Activated CD4-positive, alpha-beta T cell treated with anti-CD3 and anti-CD28 coated beads for 36 hours (primary cell): ENCODE measurements at regions of chr15 and their contacts with region 1.

Region 1: DNA sequence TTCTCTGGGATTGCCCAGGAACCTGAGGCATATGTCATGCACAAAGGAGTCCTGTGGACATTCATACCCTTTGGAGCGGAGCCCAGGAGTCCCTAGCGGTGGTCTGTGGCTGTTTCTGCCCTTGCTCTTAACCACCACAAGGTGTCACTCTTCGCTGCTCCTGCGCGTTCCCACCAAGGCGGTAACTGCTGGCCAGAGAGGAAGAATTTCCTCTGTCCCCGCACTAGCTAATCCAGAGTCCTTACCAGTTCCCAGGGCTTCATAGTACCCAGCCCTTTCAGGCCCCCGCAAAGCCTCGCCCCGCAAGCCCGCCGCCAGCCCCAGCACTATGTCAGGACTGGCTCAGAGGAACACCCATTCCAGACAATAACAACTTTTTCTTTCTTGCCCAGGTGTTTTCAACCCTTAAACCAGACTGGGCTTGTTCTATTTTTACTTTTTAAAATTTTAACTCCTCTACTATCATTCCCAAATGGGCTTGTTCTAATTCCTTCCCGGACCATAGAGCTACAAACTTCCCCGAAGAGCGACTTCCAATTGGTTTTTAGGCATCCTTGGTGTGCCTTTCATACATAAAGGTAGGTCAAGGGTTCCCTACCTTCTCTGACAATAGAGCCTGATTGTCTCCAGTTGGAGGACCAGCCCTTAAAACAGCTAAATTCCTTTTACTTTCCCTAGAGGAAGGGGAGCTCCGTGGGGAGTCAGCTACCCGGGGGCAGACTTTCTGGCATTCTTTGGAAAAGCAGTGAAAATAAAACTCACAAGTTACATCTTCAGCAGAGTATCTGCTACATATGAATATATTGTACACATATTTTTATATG is 31.8 kb upstream of the ZNF774 start:
- DNase-seq: peak; percentile 83
- ATAC-seq: peak; percentile 99
- H3K4me3 Mint-ChIP-seq: no peak overlapping the region
- H3K27ac Mint-ChIP-seq: no peak overlapping the region
- H3K4me1 Mint-ChIP-seq: peaks cover 6% of the 10 kb centered on the region
- H3K27me3 Mint-ChIP-seq: no peaks in the 10 kb centered on the region

Region 2: DNA sequence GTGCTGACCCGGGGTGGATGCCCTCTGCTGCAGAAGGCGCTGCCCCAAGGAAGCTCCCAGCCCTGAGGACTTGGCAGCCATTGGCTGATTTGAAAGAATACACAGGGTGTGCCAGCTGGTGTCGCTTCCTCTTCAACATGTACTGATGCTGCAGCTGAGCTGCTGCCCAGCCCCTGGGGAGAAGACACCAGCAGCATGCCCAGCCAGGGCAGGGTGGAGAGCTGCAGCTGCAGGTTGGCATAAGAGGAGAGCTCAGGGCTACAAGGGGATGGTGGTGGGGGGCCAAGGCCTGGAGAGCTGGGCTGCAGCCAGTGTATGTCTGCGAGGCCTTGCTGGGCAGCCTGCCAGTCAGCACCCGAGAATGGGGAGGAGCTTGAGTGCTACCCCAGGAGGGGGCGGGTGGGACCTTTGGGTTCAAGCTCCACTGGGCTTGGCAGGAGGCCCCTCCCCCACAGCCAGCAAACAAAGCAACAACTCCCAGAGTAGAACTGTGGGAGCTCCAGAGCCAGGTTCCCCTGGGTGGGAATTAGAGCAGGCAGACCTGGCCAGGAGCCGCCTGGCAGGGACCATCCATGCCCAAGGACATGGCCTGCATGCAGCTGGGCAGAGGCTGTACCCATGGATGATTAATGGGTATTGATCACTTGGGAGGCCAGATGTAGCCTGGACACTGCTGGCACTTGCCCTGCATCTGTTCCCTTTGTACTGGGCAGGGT is 128.3 kb before region 1 on chr15:
- CTCF ChIA-PET with region 1: no interaction called
- POLR2A ChIA-PET with region 1: no interaction called
- intact Hi-C with region 1: no loop called
- DNase-seq: peak; percentile 64
- ATAC-seq: peak; percentile 73
- H3K4me3 Mint-ChIP-seq: peak overlapping the region; percentile 14
- H3K27ac Mint-ChIP-seq: no peak overlapping the region
- H3K4me1 Mint-ChIP-seq: peaks cover 30% of the 10 kb centered on the region
- H3K27me3 Mint-ChIP-seq: no peaks in the 10 kb centered on the region

Region 3: GRCh38 chr15:90300988-90301706 is 19.1 kb before region 1 on chr15:
- CTCF ChIA-PET with region 1: interaction called, 94 read pairs
- POLR2A ChIA-PET with region 1: no interaction called
- intact Hi-C with region 1: no loop called
- DNase-seq: peak; percentile 80
- ATAC-seq: peak; percentile 69
- H3K4me3 Mint-ChIP-seq: no peak overlapping the region
- H3K27ac Mint-ChIP-seq: peak overlapping the region; percentile 25
- H3K4me1 Mint-ChIP-seq: peaks cover 31% of the 10 kb centered on the region
- H3K27me3 Mint-ChIP-seq: no peaks in the 10 kb centered on the region

Region 4: GRCh38 chr15:90362936-90363212 is 42.6 kb after region 1 on chr15:
- CTCF ChIA-PET with region 1: interaction called, 20 read pairs
- POLR2A ChIA-PET with region 1: no interaction called
- intact Hi-C with region 1: no loop called
- DNase-seq: no peak
- ATAC-seq: no peak
- H3K4me3 Mint-ChIP-seq: no peak overlapping the region
- H3K27ac Mint-ChIP-seq: peak overlapping the region; percentile 5
- H3K4me1 Mint-ChIP-seq: peaks cover 25% of the 10 kb centered on the region
- H3K27me3 Mint-ChIP-seq: no peaks in the 10 kb centered on the region

Region 5: DNA sequence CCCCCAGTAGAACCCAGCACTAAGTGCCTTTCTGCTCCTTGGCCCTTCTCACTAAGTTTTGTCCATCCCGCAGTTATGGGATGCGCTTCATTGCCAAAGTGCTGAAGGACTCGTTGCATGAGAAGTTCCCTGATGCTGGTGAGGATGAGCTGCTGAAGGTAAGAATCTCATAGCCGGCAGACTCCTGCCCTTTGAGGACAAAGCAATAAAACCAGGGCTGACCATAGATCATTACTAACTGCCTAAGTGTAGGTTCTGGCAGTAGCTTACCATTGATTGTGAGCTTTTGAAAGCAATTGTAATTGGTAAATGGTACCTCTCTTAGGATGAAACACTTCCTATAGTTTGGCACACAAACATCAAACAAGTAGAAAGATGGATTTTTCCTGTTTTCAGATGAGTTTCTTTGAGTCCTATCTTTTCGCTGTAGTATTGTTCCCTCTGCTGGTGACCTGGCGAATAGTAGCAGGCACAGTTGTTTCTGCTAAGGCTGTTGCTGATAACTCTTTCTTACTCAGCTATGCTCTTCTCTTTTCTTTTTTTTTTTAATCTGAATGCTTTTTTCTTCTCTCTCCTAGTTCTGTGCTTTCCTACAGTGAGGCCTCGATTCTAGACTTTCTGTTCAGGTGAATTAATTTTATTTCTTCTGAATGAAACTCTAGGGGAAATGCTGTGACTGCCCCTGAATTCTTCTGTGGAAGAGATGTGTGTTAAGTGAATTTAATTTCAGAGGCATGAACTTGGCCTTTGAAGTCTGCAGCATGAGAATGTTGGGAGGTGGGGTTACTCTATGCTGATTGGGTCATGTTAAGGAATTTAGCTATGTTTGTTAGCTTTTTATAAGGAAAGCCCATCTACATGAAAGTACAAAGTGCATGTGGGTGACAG is 162.1 kb after region 1 on chr15:
- CTCF ChIA-PET with region 1: interaction called, 114 read pairs
- POLR2A ChIA-PET with region 1: no interaction called
- intact Hi-C with region 1: loop called (anchors 1 kb)
- DNase-seq: peak; percentile 64
- ATAC-seq: no peak
- H3K4me3 Mint-ChIP-seq: no peak overlapping the region
- H3K27ac Mint-ChIP-seq: peak overlapping the region; percentile 14
- H3K4me1 Mint-ChIP-seq: peaks cover 18% of the 10 kb centered on the region
- H3K27me3 Mint-ChIP-seq: no peaks in the 10 kb centered on the region

Region 6: DNA sequence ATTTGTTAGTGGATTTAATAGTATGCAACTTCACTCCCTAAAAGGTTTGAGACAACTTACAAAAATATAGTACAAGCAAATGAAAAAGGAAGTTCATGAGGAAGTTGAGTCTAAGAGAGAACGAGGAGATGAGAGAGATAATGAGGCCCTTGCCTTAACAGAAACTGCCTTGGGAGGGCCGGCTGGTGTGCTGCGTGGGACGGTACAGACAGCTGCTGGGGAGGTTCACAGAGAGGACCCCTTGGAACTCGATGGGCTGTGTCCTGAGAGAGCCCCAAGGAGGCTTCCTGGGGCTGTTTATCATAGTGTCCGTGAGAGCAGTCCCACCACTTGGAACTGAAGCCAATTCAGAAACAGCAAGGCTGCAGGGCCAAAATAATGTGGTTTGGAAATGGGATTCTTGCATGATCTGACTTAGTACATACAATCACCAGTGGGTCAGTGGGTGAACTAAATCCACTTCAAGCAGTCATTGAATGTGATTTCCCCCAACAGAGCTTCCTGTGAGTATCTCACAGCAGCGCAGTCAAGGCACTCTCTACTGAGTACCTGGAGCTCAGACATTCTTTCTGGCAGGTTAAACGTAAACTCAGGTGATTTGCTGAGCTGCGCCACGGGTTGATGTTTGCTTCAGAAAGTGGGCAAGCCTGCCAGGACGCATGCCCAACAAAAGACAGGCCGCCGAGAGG is 300.2 kb after region 1 on chr15:
- CTCF ChIA-PET with region 1: interaction called, 5 read pairs
- POLR2A ChIA-PET with region 1: no interaction called
- intact Hi-C with region 1: loop called (anchors 5 kb)
- DNase-seq: peak; percentile 51
- ATAC-seq: peak; percentile 35
- H3K4me3 Mint-ChIP-seq: no peak overlapping the region
- H3K27ac Mint-ChIP-seq: peak overlapping the region; percentile 52
- H3K4me1 Mint-ChIP-seq: peaks cover 35% of the 10 kb centered on the region
- H3K27me3 Mint-ChIP-seq: no peaks in the 10 kb centered on the region

Region 7: DNA sequence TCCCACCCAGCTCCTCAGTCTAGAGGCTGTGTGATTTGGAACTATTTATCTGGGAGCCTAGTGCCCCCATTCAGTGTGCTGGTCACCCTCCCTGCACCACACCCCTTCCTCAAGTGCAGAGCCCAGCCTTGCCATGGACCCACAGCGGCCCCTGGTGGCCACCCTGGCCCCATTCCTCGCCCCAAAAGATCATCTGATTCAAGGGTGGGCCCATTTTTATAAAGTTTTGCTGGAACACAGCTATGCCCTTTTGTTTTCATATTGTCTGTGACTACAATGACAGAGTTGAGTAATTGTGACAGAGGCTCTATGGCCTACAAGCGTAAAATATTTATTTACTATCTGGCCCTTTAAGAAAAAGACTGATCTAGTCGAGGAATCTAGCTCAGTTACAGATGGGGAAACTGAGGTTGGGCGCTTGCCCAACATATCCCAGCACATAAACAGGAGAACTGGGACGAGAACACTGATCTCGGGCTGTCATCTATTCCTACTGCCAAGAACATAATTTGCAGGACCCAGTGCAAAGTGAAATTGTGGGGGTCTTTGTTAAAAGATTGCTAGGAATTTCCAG is 565.9 kb after region 1 on chr15:
- CTCF ChIA-PET with region 1: interaction called, 4 read pairs
- POLR2A ChIA-PET with region 1: no interaction called
- intact Hi-C with region 1: loop called in 1 of 2 experiments (anchors 2 kb)
- DNase-seq: peak; percentile 90
- ATAC-seq: peak; percentile 43
- H3K4me3 Mint-ChIP-seq: no peak overlapping the region
- H3K27ac Mint-ChIP-seq: peak overlapping the region; percentile 31
- H3K4me1 Mint-ChIP-seq: peaks cover 12% of the 10 kb centered on the region
- H3K27me3 Mint-ChIP-seq: peaks cover 3% of the 10 kb centered on the region